ENCODE measurements at regions of chr2 and their contacts with region 1.

Region 1: GRCh38 chr2:172931918-172932520 is 143.6 kb upstream of the MAP3K20 start:
- DNase-seq: peak in 3 of 4 donors; percentile 51 to 84 (median 62)
- ATAC-seq: peak; percentile 64
- H3K4me3 ChIP-seq: no peak overlapping the region
- H3K27ac ChIP-seq: peak overlapping the region in 1 of 2 donors; percentile 55
- H3K4me1 ChIP-seq: peaks cover 0 to 35% of the 10 kb centered on the region in 2 donors
- H3K27me3 ChIP-seq: peaks cover 0 to 4% of the 10 kb centered on the region in 2 donors
- CTCF ChIP-seq: peak; percentile 62 to 63

Region 2: GRCh38 chr2:172813314-172813888 is 118.6 kb before region 1 on chr2:
- intact Hi-C with region 1: loop called in 1 of 2 experiments (anchors 5 kb)
- DNase-seq: peak in 1 of 4 donors; percentile 19
- ATAC-seq: peak; percentile 46
- H3K4me3 ChIP-seq: no peak overlapping the region
- H3K27ac ChIP-seq: no peak overlapping the region
- H3K4me1 ChIP-seq: no peaks in the 10 kb centered on the region
- H3K27me3 ChIP-seq: peaks cover 2 to 10% of the 10 kb centered on the region in 2 donors
- CTCF ChIP-seq: peak; percentile 30 to 44

Region 3: DNA sequence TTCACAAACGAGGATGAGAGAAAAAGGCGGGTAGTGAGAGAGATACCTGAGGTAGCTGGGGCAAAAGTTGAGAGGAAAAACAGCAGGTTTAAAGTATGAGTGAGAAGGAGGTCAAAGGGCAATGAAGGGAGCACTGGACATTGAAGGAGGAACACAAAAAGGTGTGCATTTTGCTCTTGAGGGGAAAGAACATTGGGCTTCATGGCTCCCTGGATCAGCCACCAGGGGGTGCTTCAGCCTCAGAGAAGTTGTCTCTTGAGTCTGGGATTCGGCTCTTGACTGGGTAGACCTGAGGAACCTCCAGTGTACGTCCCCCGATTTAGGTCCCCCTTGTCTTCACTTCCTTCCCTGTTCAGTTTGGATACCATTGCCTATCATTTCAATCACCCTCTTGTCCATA is 67.8 kb before region 1 on chr2:
- intact Hi-C with region 1: loop called in 1 of 2 experiments (anchors 5 kb)
- DNase-seq: peak in 2 of 4 donors; percentile 24 to 41
- ATAC-seq: peak; percentile 93
- H3K4me3 ChIP-seq: no peak overlapping the region
- H3K27ac ChIP-seq: no peak overlapping the region
- H3K4me1 ChIP-seq: peaks cover 5 to 11% of the 10 kb centered on the region in 2 donors
- H3K27me3 ChIP-seq: peaks cover 0 to 6% of the 10 kb centered on the region in 2 donors
- CTCF ChIP-seq: peak; percentile 57 to 63

Region 4: DNA sequence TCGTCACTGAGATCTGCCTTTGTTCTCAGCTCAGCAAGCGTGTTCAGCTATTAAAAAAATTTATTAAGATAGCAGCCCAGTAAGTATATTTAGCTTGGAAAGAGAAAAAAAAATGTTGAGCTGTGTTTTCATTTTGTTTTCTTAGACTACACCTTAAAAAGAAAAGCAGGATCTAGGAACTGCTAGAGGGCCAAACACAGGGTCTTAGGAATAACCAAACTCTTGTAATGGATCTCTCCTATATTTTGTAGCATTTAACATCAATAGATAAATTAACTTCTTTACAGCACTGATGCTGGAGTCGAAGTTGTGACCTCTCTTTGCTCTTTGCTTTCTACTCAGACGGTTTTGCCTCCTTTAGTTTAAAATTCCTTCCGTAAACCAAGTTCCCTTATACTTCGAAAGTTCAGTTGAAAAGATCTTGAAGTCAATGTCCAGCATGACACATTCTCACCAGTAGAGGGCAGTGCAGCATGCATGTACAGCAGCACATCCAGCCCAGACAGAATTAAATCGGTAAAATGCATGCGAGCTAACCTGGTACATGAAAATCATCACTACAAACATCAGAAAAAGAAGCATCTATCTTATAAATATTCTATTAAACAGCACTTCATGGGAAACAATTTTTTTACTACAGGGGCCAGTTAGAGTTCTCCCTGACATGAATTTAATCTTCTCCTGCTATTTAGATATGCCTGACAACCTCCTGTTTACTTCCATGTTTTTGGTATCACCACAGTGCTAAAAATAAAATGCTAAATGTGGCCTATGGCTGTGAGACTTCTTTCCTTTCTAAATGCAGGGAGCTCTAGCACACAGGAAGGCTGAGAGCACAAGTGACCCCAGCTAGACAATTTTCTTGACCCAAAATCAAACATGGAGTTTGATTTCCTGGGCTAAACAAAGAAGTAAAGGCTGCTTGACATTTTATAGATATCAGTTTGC is 95.4 kb after region 1 on chr2:
- intact Hi-C with region 1: no loop called
- DNase-seq: peak in 3 of 4 donors; percentile 81 to 93 (median 88)
- ATAC-seq: peak; percentile 98
- H3K4me3 ChIP-seq: no peak overlapping the region
- H3K27ac ChIP-seq: peak overlapping the region in 1 of 2 donors; percentile 46
- H3K4me1 ChIP-seq: peaks cover 0 to 9% of the 10 kb centered on the region in 2 donors
- H3K27me3 ChIP-seq: no peaks in the 10 kb centered on the region
- CTCF ChIP-seq: peak; percentile 87 to 89